Activated CD4-positive, alpha-beta T cell treated with anti-CD3 and anti-CD28 coated beads, Interleukin-2, amount 10 ng/mL, durations not matched to agents 24 days and 14 days (primary cell): ENCODE measurements at regions of chr1 and their contacts with region 1.

Region 1: DNA sequence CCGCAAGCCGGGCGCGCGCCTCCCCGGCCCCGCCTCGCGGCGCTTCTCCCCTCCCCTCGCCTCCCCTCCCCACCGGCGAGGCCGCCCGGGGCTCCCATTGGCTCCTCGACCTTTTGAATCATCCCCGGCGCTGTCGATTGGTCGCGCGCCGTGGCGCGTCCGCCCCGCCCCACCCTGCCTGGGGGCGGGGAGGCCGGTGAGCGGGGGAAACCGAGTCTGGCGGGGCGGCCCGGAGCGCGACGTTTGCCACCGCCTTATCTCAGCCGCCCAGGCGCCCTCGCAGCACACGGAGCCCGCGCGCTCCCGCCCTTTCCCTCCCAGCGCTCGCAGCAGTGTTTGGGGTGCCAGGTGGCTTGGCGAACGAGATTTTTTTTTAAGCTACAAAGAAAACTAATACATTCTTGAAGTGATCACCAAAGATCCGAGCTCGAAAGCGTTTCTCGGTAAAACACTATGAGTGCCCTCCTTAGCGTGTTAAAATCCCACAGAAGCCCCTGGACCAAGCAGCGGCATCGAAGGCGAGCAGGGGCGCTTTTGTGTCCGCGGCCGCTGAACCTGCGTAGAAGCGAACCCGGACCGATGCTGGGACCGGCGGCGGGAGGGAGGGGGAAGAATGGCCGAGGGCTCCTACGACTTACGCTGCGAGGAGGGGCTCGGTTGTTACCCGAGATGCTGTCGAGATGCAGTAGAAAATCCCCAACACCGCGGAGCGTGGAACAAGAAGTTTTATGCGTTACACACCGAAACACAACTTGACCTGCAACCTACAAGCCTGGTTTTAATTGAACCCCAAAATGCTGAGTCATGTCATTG is 436 bp upstream of the LBR start:
- DNase-seq: peak; percentile 98
- H3K4me3 Mint-ChIP-seq: peak overlapping the region; percentile 90
- H3K27ac Mint-ChIP-seq: peak overlapping the region; percentile 95
- H3K4me1 Mint-ChIP-seq: peaks cover 50% of the 10 kb centered on the region
- H3K27me3 Mint-ChIP-seq: no peaks in the 10 kb centered on the region

Region 2: GRCh38 chr1:224377676-224378006 is 1050.6 kb before region 1 on chr1:
- intact Hi-C with region 1: loop called (anchors 5 kb)
- DNase-seq: peak; percentile 71
- H3K4me3 Mint-ChIP-seq: peak overlapping the region; percentile 56
- H3K27ac Mint-ChIP-seq: peak overlapping the region; percentile 84
- H3K4me1 Mint-ChIP-seq: peaks cover 84% of the 10 kb centered on the region
- H3K27me3 Mint-ChIP-seq: no peaks in the 10 kb centered on the region

Region 3: GRCh38 chr1:225441314-225442122 is 13.2 kb after region 1 on chr1:
- intact Hi-C with region 1: loop called (anchors 1 kb)
- DNase-seq: no peak
- H3K4me3 Mint-ChIP-seq: peak overlapping the region; percentile 61
- H3K27ac Mint-ChIP-seq: peak overlapping the region; percentile 76
- H3K4me1 Mint-ChIP-seq: peaks cover 60% of the 10 kb centered on the region
- H3K27me3 Mint-ChIP-seq: peaks cover 2% of the 10 kb centered on the region

Region 4: DNA sequence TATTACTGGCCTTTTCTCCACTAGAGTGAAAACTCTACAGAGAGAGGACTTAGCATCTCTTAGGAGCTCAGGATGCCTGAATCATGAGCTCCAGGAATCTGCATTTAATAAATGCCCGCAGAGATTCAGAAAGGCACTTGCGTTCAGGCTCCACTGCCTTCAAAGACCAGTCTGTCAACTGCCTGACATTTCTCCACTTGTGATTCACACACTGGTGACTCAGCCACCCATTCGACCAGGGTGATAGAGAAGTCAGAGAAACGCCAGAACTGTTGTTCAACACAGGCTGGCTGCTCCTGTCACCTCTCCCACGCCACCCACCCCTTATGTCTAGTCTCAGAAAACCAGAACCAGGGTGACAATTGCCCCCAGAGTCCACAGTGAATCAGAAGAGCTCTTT is 26.5 kb after region 1 on chr1:
- intact Hi-C with region 1: loop called (anchors 1 kb)
- DNase-seq: peak; percentile 79
- H3K4me3 Mint-ChIP-seq: peak overlapping the region; percentile 75
- H3K27ac Mint-ChIP-seq: peak overlapping the region; percentile 92
- H3K4me1 Mint-ChIP-seq: peaks cover 41% of the 10 kb centered on the region
- H3K27me3 Mint-ChIP-seq: no peaks in the 10 kb centered on the region

Region 5: GRCh38 chr1:225467193-225468020 is 39.1 kb after region 1 on chr1:
- intact Hi-C with region 1: loop called (anchors 1 kb)
- DNase-seq: peak; percentile 95
- H3K4me3 Mint-ChIP-seq: peak overlapping the region; percentile 94
- H3K27ac Mint-ChIP-seq: peak overlapping the region; percentile 98
- H3K4me1 Mint-ChIP-seq: peaks cover 39% of the 10 kb centered on the region
- H3K27me3 Mint-ChIP-seq: no peaks in the 10 kb centered on the region

Region 6: DNA sequence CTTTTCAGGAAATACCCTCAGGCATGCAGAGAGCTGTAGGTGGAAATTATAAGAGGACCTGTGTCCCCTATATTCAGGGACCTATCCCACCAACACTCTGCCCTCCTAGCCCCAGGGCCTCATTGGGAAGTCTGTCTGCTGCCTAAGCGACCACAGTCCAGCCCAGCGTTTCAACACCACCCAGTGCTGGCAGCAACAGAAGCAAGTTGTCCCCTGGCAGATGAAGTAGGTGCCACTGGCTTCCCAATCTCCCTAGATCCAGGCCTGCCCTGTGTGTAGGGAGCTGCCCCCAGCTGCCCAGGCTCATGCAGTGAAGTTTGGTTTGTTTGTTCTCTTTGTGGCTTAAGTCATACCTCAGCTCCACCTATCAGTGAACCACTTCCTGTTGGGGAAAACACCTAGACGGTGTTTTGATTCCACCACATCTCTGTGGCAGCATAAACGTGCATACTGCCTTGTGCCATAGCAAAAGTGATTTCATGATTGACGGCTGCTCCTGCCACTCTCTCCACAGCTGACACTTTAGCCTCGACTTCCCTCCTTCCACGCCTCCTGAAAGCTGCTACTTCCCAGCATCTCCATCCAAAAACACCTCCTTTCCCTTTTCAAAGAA is 468.8 kb after region 1 on chr1:
- intact Hi-C with region 1: loop called (anchors 1 kb)
- DNase-seq: peak; percentile 95
- H3K4me3 Mint-ChIP-seq: peak overlapping the region; percentile 75
- H3K27ac Mint-ChIP-seq: peak overlapping the region; percentile 84
- H3K4me1 Mint-ChIP-seq: peaks cover 39% of the 10 kb centered on the region
- H3K27me3 Mint-ChIP-seq: peaks cover 17% of the 10 kb centered on the region

Region 7: GRCh38 chr1:225923692-225924555 is 495.6 kb after region 1 on chr1 and contains the start of gene PYCR2:
- intact Hi-C with region 1: loop called (anchors 1 kb)
- DNase-seq: peak; percentile 99
- H3K4me3 Mint-ChIP-seq: peak within 1 kb of the TSS; percentile 97
- H3K27ac Mint-ChIP-seq: peak within 1 kb of the TSS; percentile 95
- H3K4me1 Mint-ChIP-seq: peaks cover 39% of the 10 kb centered on the region
- H3K27me3 Mint-ChIP-seq: no peaks in the 10 kb centered on the region
- total RNA-seq, gene PYCR2: 144 and 150 TPM in 2 replicates